Dorsolateral prefrontal cortex (tissue), 120 donors: ENCODE measurements at regions of chr16 and their contacts with region 1.

Region 1: DNA sequence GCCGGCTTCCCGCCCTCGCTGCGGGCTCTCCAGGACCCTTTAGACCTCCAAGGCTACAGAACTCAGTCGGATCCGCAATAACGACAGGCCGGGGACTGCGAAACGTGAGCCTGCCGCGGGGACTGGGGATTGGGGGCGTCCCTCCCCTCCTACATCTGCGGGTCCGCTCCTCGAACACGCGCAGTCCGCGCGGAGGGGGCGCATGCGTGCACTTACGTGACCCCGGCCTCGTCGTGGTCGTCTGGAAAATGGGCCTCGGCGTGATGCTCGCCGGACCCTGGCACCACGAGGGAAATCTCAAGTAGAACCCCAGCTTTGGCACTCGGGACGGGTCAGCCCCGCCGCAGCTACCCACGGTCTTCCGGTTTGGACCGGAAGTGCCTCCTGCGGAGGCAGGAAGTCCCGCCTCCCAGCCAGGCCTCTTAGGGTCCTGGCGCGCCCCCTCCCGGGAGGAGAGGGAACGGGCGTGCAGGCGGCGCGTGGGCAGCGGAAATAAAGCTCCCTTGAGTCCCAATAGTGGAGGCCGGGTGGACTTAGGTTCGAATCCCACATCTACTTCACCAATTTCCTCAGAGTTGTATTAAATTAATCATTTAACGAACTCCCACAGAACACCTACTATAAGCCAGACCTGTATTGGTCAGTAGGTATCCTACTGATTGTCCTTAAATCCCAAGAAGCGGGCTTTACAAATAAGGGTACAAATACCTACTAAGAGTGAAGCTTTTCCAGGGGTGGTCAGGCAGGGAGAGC is at the start of gene TAF1C:
- DNase-seq: peak; percentile 83 to 93 (median 90)
- H3K4me3 ChIP-seq: peak within 1 kb of the TSS; percentile 55 to 100 (median 96)
- H3K27ac ChIP-seq: peak within 1 kb of the TSS in 51 of 59 donors; percentile 1 to 91 (median 77)
- H3K27me3 ChIP-seq: no peaks in the 10 kb centered on the region
- CTCF ChIP-seq: peak; percentile 85 to 99 (median 97)
- total RNA-seq, gene TAF1C: 33.5 to 87.0 (median 56.1) TPM

Region 2: GRCh38 chr16:83967806-83968305 is 219.0 kb before region 1 on chr16 and contains the start of gene NECAB2:
- intact Hi-C with region 1: loop called (anchors 5 kb)
- DNase-seq: peak in 4 of 10 donors; percentile 47 to 78 (median 51)
- H3K4me3 ChIP-seq: peak within 1 kb of the TSS in 55 of 59 donors; percentile 21 to 66 (median 46)
- H3K27ac ChIP-seq: no peak within 1 kb of the TSS
- H3K27me3 ChIP-seq: no peaks in the 10 kb centered on the region
- CTCF ChIP-seq: peak; percentile 14 to 87 (median 72)
- total RNA-seq, gene NECAB2: 15.8 to 117 (median 47.0) TPM

Region 3: DNA sequence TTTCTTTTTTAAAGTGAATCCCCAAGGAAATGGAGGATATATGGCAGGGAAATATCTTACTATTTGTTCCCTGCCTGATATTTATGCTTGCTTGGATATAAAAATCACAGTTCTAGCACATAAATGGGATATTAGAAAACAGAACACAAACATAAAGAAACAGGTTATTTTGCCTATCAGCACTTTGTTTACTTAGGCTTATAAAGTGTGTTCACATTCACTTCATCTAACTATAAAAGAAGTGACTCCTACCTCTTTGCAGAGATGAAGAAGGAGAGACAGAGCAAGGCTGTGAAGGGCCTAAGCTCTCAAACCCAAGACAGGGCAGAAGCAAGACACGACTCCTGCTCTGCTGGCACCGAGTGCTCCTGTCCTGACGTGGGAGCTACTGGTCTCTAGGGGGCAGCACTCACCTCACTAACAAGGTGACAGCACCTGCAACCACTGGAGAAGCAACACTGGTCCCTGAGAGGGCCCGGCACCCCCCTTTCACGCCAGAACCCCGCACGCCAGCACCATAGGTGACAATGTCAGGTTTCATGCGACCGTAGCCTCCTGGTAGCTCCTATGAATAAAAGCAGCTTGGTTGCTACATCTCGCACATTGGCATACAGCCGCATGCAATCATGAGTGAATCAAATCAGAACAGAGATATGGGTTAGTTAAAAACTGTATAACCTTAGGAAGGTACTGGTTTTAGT is 102.1 kb before region 1 on chr16:
- intact Hi-C with region 1: loop called in 1 of 2 experiments (anchors 10 kb)
- DNase-seq: peak in 2 of 10 donors; percentile 52 to 53
- H3K4me3 ChIP-seq: no peak overlapping the region
- H3K27ac ChIP-seq: peak overlapping the region in 7 of 59 donors; percentile 14 to 74 (median 46)
- H3K27me3 ChIP-seq: no peaks in the 10 kb centered on the region
- CTCF ChIP-seq: peak; percentile 19 to 76 (median 60)

Region 4: GRCh38 chr16:84144859-84145639 is 41.8 kb before region 1 on chr16 and contains the starts of genes DNAAF1 and HSDL1:
- intact Hi-C with region 1: loop called (anchors 2 kb)
- DNase-seq: peak; percentile 88 to 97 (median 92)
- H3K4me3 ChIP-seq: peak within 1 kb of the TSS; percentile 57 to 99 (median 90)
- H3K27ac ChIP-seq: peak within 1 kb of the TSS in 46 of 59 donors; percentile 23 to 89 (median 73)
- H3K27me3 ChIP-seq: no peaks in the 10 kb centered on the region
- CTCF ChIP-seq: peak in 30 of 56 donors; percentile 11 to 54 (median 30)
- total RNA-seq, gene DNAAF1: 3.6 to 19.7 (median 8.5) TPM
- total RNA-seq, gene HSDL1: 21.5 to 75.4 (median 50.4) TPM

Region 5: GRCh38 chr16:84406006-84406963 is 219.4 kb after region 1 on chr16:
- intact Hi-C with region 1: loop called (anchors 2 to 10 kb)
- DNase-seq: peak; percentile 35 to 94 (median 87)
- H3K4me3 ChIP-seq: peak overlapping the region; percentile 1 to 67 (median 44)
- H3K27ac ChIP-seq: peak overlapping the region; percentile 30 to 95 (median 91)
- H3K27me3 ChIP-seq: no peaks in the 10 kb centered on the region
- CTCF ChIP-seq: peak; percentile 23 to 86 (median 71)